Left cardiac atrium (tissue), 4 donors: ENCODE measurements at regions of chr3 and their contacts with region 1.

Region 1: DNA sequence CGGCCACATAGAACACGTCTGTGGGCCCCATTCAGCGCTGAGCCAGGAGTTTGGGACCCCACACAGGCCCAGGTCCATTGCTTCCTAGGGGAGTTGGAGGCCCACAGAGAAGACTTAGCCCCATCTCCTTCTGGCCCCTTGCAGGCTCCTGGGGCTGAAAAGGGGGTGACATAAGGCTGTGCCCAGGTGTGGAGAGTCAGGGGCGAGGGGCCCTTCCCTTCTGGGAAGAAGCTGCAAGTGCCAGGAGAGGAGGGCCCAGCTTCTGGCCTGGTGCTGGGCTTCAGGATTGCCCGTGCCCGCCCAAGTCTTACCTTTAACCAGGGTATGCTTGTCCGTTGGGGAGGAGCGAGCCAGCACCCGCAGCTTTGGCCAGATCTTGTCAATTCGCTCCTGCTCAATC is 28.9 kb upstream of the SEC13 start:
- DNase-seq: no peak
- ATAC-seq: no peak

Region 2: GRCh38 chr3:10248184-10249080 is 101.4 kb before region 1 on chr3 and contains the start of gene TATDN2:
- intact Hi-C with region 1: no loop called
- DNase-seq: peak; percentile 98
- ATAC-seq: peak; percentile 98 to 99
- total RNA-seq, gene TATDN2: 17.9 to 27.0 TPM

Region 3: GRCh38 chr3:10738688-10739372 is 389.0 kb after region 1 on chr3:
- intact Hi-C with region 1: loop called in 1 of 2 experiments (anchors 5 kb)
- DNase-seq: peak; percentile 71
- ATAC-seq: peak; percentile 87 to 89